GM12878 (cell line): ENCODE measurements at regions of chr3 and their contacts with region 1.

Region 1: GRCh38 chr3:155701882-155702465 is 42.9 kb downstream of the PLCH1 start:
- DNase-seq: no peak
- ATAC-seq: peak; percentile 83
- H3K4me3 ChIP-seq: no peak overlapping the region
- H3K27ac ChIP-seq: no peak overlapping the region
- H3K4me1 ChIP-seq: no peaks in the 10 kb centered on the region
- H3K27me3 ChIP-seq: no peaks in the 10 kb centered on the region; a peak in 1 of 4 replicates
- CTCF ChIP-seq: peak; percentile 38 to 61 (median 46); a peak in 4 of 6 replicates
- EP300 ChIP-seq: no peak
- POLR2A ChIP-seq: no peak
- RAD21 ChIP-seq: peak; percentile 65

Region 2: DNA sequence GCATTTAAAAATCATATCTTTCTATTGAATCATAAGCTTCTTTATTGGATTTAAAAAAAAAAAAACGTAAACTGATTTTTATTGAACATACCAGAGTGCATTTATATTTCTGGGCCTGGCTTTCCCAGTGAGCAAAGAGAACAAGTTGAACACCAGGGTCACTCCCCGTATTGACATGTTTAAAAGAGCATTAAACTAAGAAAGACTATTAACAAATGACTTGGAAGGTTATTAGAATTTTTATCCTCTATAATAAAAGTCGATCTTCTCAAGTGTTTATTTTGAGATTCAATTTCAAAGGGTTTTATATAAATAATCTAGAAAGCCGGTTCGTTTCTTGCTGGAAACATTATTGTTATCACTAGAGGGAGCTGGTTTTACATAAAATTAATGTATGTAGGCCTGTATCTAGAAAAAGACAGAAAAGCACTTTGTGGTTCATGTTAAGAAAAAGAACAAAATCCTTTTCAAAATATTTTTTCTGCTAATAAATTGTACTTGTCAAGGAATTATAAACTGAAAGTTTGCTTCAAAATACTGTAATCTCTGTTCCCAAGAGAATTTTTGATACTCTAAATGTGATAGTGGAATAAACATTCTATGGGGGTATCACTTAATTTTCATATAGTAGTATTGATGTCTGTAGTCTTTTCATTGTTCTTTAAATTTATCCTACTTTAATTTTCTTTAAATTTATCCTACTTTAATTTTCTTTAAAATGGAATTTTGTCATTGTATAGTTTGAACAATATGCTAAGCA is 943.7 kb before region 1 on chr3:
- CTCF ChIA-PET with region 1: no interaction called
- POLR2A ChIA-PET with region 1: no interaction called
- RAD21 ChIA-PET with region 1: interaction called, 4 read pairs
- SMC1A ChIA-PET with region 1: no interaction called
- in situ Hi-C with region 1: no loop called
- intact Hi-C with region 1: loop called (anchors 5 kb)
- DNase-seq: no peak
- ATAC-seq: no peak
- H3K4me3 ChIP-seq: no peak overlapping the region
- H3K27ac ChIP-seq: no peak overlapping the region
- H3K4me1 ChIP-seq: no peaks in the 10 kb centered on the region
- H3K27me3 ChIP-seq: no peaks in the 10 kb centered on the region
- CTCF ChIP-seq: no peak; a peak in 1 of 6 replicates
- EP300 ChIP-seq: no peak
- POLR2A ChIP-seq: no peak
- RAD21 ChIP-seq: 0 out of 2 replicates have a peak, but pooled peaks have one; percentile 26

Region 3: GRCh38 chr3:155211266-155211665 is 490.7 kb before region 1 on chr3:
- CTCF ChIA-PET with region 1: no interaction called
- POLR2A ChIA-PET with region 1: no interaction called
- RAD21 ChIA-PET with region 1: no interaction called
- SMC1A ChIA-PET with region 1: no interaction called
- in situ Hi-C with region 1: no loop called
- intact Hi-C with region 1: no loop called
- DNase-seq: no peak
- ATAC-seq: no peak
- H3K4me3 ChIP-seq: no peak overlapping the region
- H3K27ac ChIP-seq: no peak overlapping the region
- H3K4me1 ChIP-seq: no peaks in the 10 kb centered on the region
- H3K27me3 ChIP-seq: no peaks in the 10 kb centered on the region
- CTCF ChIP-seq: no peak
- EP300 ChIP-seq: no peak
- POLR2A ChIP-seq: no peak
- RAD21 ChIP-seq: no peak

Region 4: GRCh38 chr3:155352900-155353490 is 349.0 kb before region 1 on chr3:
- CTCF ChIA-PET with region 1: interaction called, 62 read pairs
- POLR2A ChIA-PET with region 1: no interaction called
- RAD21 ChIA-PET with region 1: interaction called, 23 read pairs
- SMC1A ChIA-PET with region 1: interaction called, 27 read pairs
- in situ Hi-C with region 1: loop called (anchors 5 kb)
- intact Hi-C with region 1: loop called (anchors 1 kb)
- DNase-seq: no peak
- ATAC-seq: peak; percentile 54
- H3K4me3 ChIP-seq: no peak overlapping the region
- H3K27ac ChIP-seq: no peak overlapping the region
- H3K4me1 ChIP-seq: no peaks in the 10 kb centered on the region
- H3K27me3 ChIP-seq: no peaks in the 10 kb centered on the region; a peak in 1 of 4 replicates
- CTCF ChIP-seq: peak; percentile 16 to 59 (median 42); a peak in 3 of 6 replicates
- EP300 ChIP-seq: no peak
- POLR2A ChIP-seq: no peak
- RAD21 ChIP-seq: peak; percentile 56

Region 5: GRCh38 chr3:155382396-155383042 is 319.5 kb before region 1 on chr3:
- CTCF ChIA-PET with region 1: interaction called, 64 read pairs
- POLR2A ChIA-PET with region 1: no interaction called
- RAD21 ChIA-PET with region 1: interaction called, 26 read pairs
- SMC1A ChIA-PET with region 1: interaction called, 18 read pairs
- in situ Hi-C with region 1: loop called (anchors 5 kb)
- intact Hi-C with region 1: loop called (anchors 1 kb)
- DNase-seq: no peak
- ATAC-seq: peak; percentile 90
- H3K4me3 ChIP-seq: no peak overlapping the region
- H3K27ac ChIP-seq: no peak overlapping the region
- H3K4me1 ChIP-seq: no peaks in the 10 kb centered on the region
- H3K27me3 ChIP-seq: no peaks in the 10 kb centered on the region
- CTCF ChIP-seq: peak; percentile 50 to 67 (median 65)
- EP300 ChIP-seq: no peak
- POLR2A ChIP-seq: no peak
- RAD21 ChIP-seq: peak; percentile 61

Region 6: GRCh38 chr3:155572085-155572484 is 129.9 kb before region 1 on chr3:
- CTCF ChIA-PET with region 1: no interaction called
- POLR2A ChIA-PET with region 1: no interaction called
- RAD21 ChIA-PET with region 1: no interaction called
- SMC1A ChIA-PET with region 1: no interaction called
- in situ Hi-C with region 1: no loop called
- intact Hi-C with region 1: loop called (anchors 5 kb)
- DNase-seq: no peak
- ATAC-seq: no peak
- H3K4me3 ChIP-seq: no peak overlapping the region
- H3K27ac ChIP-seq: no peak overlapping the region
- H3K4me1 ChIP-seq: no peaks in the 10 kb centered on the region
- H3K27me3 ChIP-seq: no peaks in the 10 kb centered on the region
- CTCF ChIP-seq: no peak
- EP300 ChIP-seq: no peak
- POLR2A ChIP-seq: no peak
- RAD21 ChIP-seq: no peak

Region 7: DNA sequence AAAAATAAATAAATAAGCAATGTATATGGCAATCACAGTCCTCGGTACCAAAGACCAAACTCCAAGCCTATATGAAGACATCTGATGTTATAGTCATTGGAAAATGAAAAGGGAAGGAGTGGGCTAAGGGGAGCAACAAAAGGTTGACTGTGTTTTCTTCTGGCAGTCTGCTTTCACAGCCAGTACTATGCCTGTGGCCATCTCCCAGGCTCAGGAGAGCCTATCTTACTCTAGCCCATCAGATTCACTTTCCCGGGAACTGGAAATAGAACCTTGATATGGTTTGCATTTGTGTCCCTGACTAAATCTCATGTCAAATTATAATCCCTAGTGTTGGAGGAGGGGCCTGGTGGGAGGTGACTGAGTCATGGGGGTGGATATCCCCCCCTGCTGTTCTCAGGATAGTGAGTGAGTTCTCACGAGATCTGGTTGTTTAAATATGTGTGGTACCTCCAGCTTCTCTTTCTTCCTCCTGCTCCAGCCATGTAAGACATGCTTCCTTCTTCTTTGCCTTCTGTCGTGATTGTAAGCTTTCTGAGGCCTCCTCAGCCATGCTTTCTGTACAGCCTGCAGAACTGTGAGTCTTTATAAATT is 62.4 kb before region 1 on chr3:
- CTCF ChIA-PET with region 1: no interaction called
- POLR2A ChIA-PET with region 1: no interaction called
- RAD21 ChIA-PET with region 1: no interaction called
- SMC1A ChIA-PET with region 1: no interaction called
- in situ Hi-C with region 1: no loop called
- intact Hi-C with region 1: no loop called
- DNase-seq: no peak
- ATAC-seq: no peak
- H3K4me3 ChIP-seq: no peak overlapping the region
- H3K27ac ChIP-seq: no peak overlapping the region
- H3K4me1 ChIP-seq: no peaks in the 10 kb centered on the region
- H3K27me3 ChIP-seq: no peaks in the 10 kb centered on the region
- CTCF ChIP-seq: no peak
- EP300 ChIP-seq: no peak
- POLR2A ChIP-seq: no peak
- RAD21 ChIP-seq: no peak

Region 8: GRCh38 chr3:155682426-155683343 is 19.3 kb before region 1 on chr3:
- CTCF ChIA-PET with region 1: interaction called, 19 read pairs
- POLR2A ChIA-PET with region 1: no interaction called
- RAD21 ChIA-PET with region 1: no interaction called
- SMC1A ChIA-PET with region 1: no interaction called
- in situ Hi-C with region 1: no loop called
- intact Hi-C with region 1: no loop called
- DNase-seq: no peak
- ATAC-seq: no peak
- H3K4me3 ChIP-seq: no peak overlapping the region
- H3K27ac ChIP-seq: no peak overlapping the region
- H3K4me1 ChIP-seq: no peaks in the 10 kb centered on the region
- H3K27me3 ChIP-seq: no peaks in the 10 kb centered on the region; a peak in 1 of 4 replicates
- CTCF ChIP-seq: no peak
- EP300 ChIP-seq: no peak
- POLR2A ChIP-seq: no peak
- RAD21 ChIP-seq: no peak

Region 9: GRCh38 chr3:155712008-155712407 is 10.0 kb after region 1 on chr3:
- CTCF ChIA-PET with region 1: interaction called, 30 read pairs
- POLR2A ChIA-PET with region 1: no interaction called
- RAD21 ChIA-PET with region 1: interaction called, 26 read pairs
- SMC1A ChIA-PET with region 1: interaction called, 14 read pairs
- in situ Hi-C with region 1: no loop called
- intact Hi-C with region 1: no loop called
- DNase-seq: peak; percentile 21
- ATAC-seq: peak; percentile 97
- H3K4me3 ChIP-seq: no peak overlapping the region
- H3K27ac ChIP-seq: no peak overlapping the region
- H3K4me1 ChIP-seq: no peaks in the 10 kb centered on the region
- H3K27me3 ChIP-seq: no peaks in the 10 kb centered on the region
- CTCF ChIP-seq: no peak
- EP300 ChIP-seq: peak in 1 of 2 experiments; percentile 68; a peak in 1 of 4 replicates
- POLR2A ChIP-seq: no peak
- RAD21 ChIP-seq: no peak